ENCODE measurements at regions of chr15 and their contacts with region 1.

Region 1: DNA sequence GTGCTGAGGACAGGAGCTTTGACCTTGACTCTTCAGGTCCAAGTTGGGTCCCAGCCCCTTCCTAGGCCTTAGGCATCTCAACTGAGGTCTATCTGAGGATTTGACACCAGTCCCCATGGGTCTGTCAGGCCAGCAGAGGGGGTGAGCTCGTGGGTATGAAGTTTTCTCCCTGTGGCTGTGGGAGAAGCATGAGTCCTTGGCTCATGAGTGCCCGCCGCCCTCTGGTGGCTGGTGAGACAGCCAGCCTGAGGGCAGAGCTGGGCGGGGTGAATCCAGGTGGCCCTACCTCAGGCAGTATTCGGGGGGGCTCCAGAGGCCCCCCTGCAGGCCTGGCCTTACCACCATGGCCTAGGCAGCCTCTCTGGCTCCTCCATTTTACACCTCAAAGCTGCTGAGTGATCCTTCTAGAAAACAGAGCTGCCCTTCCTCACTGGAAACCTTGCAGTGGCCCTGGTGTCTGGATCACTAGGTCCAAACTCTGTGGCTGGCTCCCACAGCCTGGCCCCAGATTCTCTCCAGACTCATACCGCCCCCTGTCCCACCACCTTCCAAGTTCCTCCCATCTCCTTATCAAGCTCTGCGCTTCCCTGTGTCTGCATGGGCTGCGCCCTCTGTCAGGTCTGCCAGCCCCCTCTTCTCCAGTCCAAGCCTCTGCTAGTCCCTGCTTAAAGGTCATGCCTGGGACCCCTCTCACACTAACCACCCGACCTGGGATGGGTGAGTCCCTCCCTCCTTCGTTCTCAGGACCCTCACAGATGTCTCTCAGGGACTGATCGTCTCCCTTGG is 16.1 kb downstream of the SH2D7 start:
- DNase-seq: peak; percentile 85 to 90
- H3K4me3 ChIP-seq: no peak overlapping the region
- H3K27ac ChIP-seq: no peak overlapping the region
- H3K4me1 ChIP-seq: no peaks in the 10 kb centered on the region
- H3K27me3 ChIP-seq: no peaks in the 10 kb centered on the region
- CTCF ChIP-seq: peak; percentile 95 to 98

Region 2: GRCh38 chr15:77959432-77959879 is 149.0 kb before region 1 on chr15:
- intact Hi-C with region 1: loop called (anchors 2 kb)
- DNase-seq: peak; percentile 63 to 84
- H3K4me3 ChIP-seq: no peak overlapping the region
- H3K27ac ChIP-seq: no peak overlapping the region
- H3K4me1 ChIP-seq: peaks cover 0 to 6% (median 2%) of the 10 kb centered on the region in 4 donors
- H3K27me3 ChIP-seq: no peaks in the 10 kb centered on the region
- CTCF ChIP-seq: peak; percentile 93 to 98

Region 3: DNA sequence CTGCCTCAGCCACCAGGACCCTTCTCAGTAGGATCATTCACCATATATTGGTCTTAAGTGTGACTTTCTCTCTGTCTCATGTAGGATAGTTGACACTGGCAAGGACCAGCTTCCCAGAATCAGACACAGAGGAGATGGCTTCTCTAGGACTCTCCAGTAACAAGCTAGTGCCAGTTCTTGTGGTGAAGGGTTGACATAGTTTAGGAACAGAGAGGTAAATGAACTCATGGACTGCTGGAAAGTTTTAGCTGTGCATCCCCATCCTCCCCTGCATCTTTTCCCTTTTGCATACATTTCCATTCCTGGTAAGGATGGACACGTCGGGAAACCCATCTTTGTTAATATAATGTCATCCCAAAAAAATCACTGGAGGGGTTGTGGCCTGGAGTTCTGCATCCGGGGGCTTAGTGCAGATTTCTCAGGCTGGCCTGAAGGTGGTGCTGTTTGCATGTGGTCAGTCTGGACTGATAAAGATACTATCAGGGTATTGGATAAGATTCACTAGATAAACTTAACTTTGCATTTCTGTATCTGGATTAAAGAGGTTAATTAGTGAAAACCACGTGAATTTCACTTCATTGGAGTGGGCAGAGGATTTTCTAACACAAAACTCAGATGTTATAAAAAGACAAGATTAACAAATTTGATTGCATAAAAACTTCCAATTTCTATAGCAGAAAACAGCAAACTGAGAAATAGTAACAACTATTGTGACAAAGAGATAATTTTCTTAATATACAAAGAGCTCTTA is 141.8 kb before region 1 on chr15:
- intact Hi-C with region 1: loop called (anchors 2 kb)
- DNase-seq: no peak
- H3K4me3 ChIP-seq: no peak overlapping the region
- H3K27ac ChIP-seq: no peak overlapping the region
- H3K4me1 ChIP-seq: no peaks in the 10 kb centered on the region
- H3K27me3 ChIP-seq: no peaks in the 10 kb centered on the region
- CTCF ChIP-seq: peak; percentile 82 to 86

Region 4: GRCh38 chr15:78195735-78196201 is 87.3 kb after region 1 on chr15:
- intact Hi-C with region 1: loop called (anchors 5 kb)
- DNase-seq: no peak
- H3K4me3 ChIP-seq: no peak overlapping the region
- H3K27ac ChIP-seq: no peak overlapping the region
- H3K4me1 ChIP-seq: no peaks in the 10 kb centered on the region
- H3K27me3 ChIP-seq: no peaks in the 10 kb centered on the region
- CTCF ChIP-seq: peak; percentile 82 to 83

Region 5: GRCh38 chr15:78241007-78241406 is 132.5 kb after region 1 on chr15:
- intact Hi-C with region 1: loop called (anchors 5 kb)
- DNase-seq: peak; percentile 83 to 86
- H3K4me3 ChIP-seq: no peak overlapping the region
- H3K27ac ChIP-seq: no peak overlapping the region
- H3K4me1 ChIP-seq: peaks cover 0 to 4% (median 0%) of the 10 kb centered on the region in 4 donors
- H3K27me3 ChIP-seq: peaks cover 0 to 6% of the 10 kb centered on the region in 2 donors
- CTCF ChIP-seq: peak; percentile 80 to 81